ENCODE measurements at regions of chrX and their contacts with region 1.

Region 1: DNA sequence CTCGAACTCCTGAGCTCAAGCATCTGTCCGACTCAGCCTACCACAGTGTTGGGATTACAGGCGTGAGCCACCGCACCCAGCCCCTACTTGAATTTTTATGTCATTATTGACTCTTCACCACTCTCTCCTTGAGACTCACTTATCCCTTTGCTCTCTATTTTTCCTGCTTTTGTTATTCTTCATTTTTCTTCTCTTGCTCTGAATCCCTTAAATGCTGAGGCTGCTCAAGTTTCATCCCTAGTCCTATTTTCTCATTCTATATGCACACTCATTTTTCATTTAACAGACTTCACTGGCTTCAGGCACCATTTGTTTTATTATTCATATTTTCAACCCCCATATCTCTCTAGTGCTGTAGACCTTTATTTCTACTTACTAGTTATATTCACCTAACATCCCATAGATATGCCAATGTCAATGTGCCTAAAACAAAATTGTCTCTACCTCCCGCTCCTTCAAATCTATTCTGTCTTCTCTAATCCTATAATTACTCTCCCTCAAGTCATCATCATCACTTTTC is 85.7 kb downstream of the APOOL start:
- DNase-seq: no peak
- ATAC-seq: no peak
- H3K4me3 ChIP-seq: no peak overlapping the region
- H3K4me3 Mint-ChIP-seq: no peak overlapping the region
- H3K27ac ChIP-seq: no peak overlapping the region
- H3K27ac Mint-ChIP-seq: no peak overlapping the region
- H3K4me1 ChIP-seq: no peaks in the 10 kb centered on the region
- H3K4me1 Mint-ChIP-seq: no peaks in the 10 kb centered on the region
- H3K27me3 ChIP-seq: no peaks in the 10 kb centered on the region
- H3K27me3 Mint-ChIP-seq: peaks cover 0 to 21% of the 10 kb centered on the region in 2 donors

Region 2: GRCh38 chrX:85111347-85111746 is 22.0 kb after region 1 on chrX:
- CTCF ChIA-PET with region 1: interaction called in 1 of 2 experiments, 10 read pairs
- POLR2A ChIA-PET with region 1: no interaction called
- DNase-seq: peak in 1 of 35 experiments; percentile 4
- ATAC-seq: no peak
- H3K4me3 ChIP-seq: no peak overlapping the region
- H3K4me3 Mint-ChIP-seq: no peak overlapping the region
- H3K27ac ChIP-seq: no peak overlapping the region
- H3K27ac Mint-ChIP-seq: no peak overlapping the region
- H3K4me1 ChIP-seq: no peaks in the 10 kb centered on the region
- H3K4me1 Mint-ChIP-seq: no peaks in the 10 kb centered on the region
- H3K27me3 ChIP-seq: no peaks in the 10 kb centered on the region
- H3K27me3 Mint-ChIP-seq: peaks cover 0 to 11% of the 10 kb centered on the region in 2 donors